GM12878 (cell line): ENCODE measurements at regions of chr10 and their contacts with region 1.

Region 1: DNA sequence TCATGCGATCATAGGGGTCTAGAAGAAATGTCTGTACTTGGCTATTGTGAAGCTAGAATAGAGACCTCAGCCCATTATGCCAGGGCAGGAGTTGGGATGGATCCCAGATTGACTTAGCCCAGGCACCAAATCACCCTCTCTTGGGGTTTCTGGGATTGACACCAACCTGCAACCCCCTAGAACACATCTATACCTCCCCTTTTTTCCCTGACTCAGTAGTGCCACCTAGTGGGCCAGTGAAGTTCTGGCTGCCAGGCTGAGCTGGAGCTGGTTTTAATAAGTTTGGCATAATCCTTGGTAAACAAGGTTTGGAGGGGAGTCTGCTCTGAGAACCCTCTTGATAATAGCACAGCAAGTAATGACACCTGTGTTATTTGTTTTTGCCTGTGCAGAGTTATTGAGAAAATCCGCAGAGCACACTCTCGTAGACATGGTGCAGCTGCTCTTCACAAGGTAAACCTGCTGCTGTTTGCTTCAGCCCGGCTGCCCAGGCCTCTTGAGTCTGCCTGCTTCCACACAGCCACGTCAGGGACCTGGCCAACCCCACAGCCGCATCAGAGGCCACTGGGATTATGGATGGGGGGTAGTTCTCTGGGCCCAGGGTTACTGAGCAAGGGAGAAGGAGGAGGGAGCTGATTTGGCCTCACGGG is 43.3 kb upstream of the NFKB2 start:
- DNase-seq: no peak
- ATAC-seq: peak; percentile 92
- H3K4me3 ChIP-seq: no peak overlapping the region
- H3K27ac ChIP-seq: no peak overlapping the region
- H3K4me1 ChIP-seq: no peaks in the 10 kb centered on the region
- H3K27me3 ChIP-seq: no peaks in the 10 kb centered on the region
- CTCF ChIP-seq: peak; percentile 86 to 95 (median 93)
- EP300 ChIP-seq: no peak
- POLR2A ChIP-seq: no peak
- RAD21 ChIP-seq: peak; percentile 92

Region 2: GRCh38 chr10:102159051-102159597 is 193.1 kb before region 1 on chr10:
- CTCF ChIA-PET with region 1: interaction called, 150 read pairs
- POLR2A ChIA-PET with region 1: interaction called, 3 read pairs
- RAD21 ChIA-PET with region 1: interaction called, 3 read pairs
- SMC1A ChIA-PET with region 1: interaction called, 4 read pairs
- in situ Hi-C with region 1: no loop called
- intact Hi-C with region 1: no loop called
- DNase-seq: no peak
- ATAC-seq: no peak
- H3K4me3 ChIP-seq: no peak overlapping the region
- H3K27ac ChIP-seq: no peak overlapping the region
- H3K4me1 ChIP-seq: no peaks in the 10 kb centered on the region; the same call in 1 of the 2 replicates
- H3K27me3 ChIP-seq: no peaks in the 10 kb centered on the region
- CTCF ChIP-seq: no peak
- EP300 ChIP-seq: no peak
- POLR2A ChIP-seq: no peak
- RAD21 ChIP-seq: no peak

Region 3: DNA sequence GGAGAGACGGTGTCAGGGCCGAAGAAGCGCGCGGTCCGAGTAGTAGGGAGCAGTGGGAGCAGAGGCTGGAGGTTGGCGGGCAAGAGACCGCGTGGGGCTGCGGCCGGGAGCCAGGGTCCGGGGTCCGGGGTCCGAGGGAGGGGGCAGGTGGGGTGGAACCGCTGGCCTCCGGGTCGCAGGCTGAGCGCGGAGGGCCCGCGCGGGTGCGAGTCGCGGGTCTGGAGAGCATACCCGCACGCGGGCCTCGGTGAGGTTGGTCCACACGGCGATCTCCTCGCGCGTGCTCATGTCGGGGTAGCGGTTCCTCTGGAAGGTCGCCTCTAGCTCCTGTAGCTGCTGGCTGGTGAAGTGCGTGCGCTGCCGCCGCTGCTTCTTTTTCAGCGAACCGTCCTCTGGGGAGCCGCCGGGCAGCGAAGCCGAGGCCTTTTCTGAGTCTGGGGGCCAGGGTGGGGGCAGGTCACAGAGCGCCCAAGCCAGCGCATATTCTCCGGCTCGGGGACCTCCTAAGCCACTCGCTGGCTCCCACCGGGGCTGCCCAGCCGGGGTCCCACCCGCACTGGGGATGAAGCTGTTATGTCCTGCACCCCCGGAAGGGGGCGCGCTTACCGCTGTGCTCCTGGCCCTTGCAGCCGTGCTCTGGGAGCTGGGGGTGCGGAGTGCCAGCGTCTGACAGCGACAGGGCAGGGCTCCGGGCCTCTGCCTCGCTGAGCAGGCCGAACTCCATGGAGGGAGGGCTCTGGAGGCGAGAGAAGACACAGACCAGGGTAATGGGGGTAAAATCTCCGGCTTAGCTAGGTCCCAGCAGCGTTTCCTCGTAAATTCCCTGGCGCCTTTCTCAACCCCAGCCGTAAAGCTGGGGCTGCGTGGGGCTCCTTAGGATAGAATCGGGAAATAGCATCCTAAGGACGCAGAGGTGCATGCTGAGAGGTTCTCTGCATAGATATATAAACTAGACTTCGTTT is 120.6 kb before region 1 on chr10:
- CTCF ChIA-PET with region 1: interaction called, 632 read pairs
- POLR2A ChIA-PET with region 1: interaction called, 4 read pairs
- RAD21 ChIA-PET with region 1: interaction called, 256 read pairs
- SMC1A ChIA-PET with region 1: interaction called, 231 read pairs
- in situ Hi-C with region 1: loop called (anchors 5 kb)
- intact Hi-C with region 1: loop called (anchors 1 kb)
- DNase-seq: no peak
- ATAC-seq: peak; percentile 77
- H3K4me3 ChIP-seq: peak overlapping the region; percentile 64
- H3K27ac ChIP-seq: no peak overlapping the region
- H3K4me1 ChIP-seq: peaks cover 10% of the 10 kb centered on the region
- H3K27me3 ChIP-seq: peaks cover 5 to 11% of the 10 kb centered on the region in 2 experiments; a peak in 3 of 4 replicates
- CTCF ChIP-seq: peak; percentile 76 to 90 (median 80)
- EP300 ChIP-seq: no peak
- POLR2A ChIP-seq: no peak
- RAD21 ChIP-seq: peak; percentile 55; the same call in 1 of the 2 replicates

Region 4: DNA sequence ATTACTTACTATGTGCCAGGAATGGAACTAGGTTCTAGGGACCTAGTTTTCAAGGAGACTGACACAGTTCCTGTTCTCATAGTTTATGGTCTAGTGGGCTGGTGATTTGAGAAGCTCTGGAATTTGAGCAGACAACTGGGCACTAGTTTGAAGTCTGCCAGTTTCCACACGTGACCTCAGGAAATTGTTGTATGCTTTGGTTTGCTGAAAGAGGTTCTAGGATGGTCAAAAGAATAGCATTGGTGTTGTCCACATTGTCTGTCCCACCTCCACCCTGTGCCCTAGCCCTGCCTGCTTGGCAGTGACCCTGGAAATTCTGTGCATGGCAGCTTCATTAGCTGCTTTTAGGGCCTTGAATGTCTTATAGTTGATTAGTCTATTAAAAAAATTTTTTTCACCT is 78.1 kb before region 1 on chr10:
- CTCF ChIA-PET with region 1: interaction called, 14 read pairs
- POLR2A ChIA-PET with region 1: no interaction called
- RAD21 ChIA-PET with region 1: no interaction called
- SMC1A ChIA-PET with region 1: interaction called, 4 read pairs
- in situ Hi-C with region 1: no loop called
- intact Hi-C with region 1: no loop called
- DNase-seq: no peak
- ATAC-seq: no peak
- H3K4me3 ChIP-seq: no peak overlapping the region
- H3K27ac ChIP-seq: no peak overlapping the region
- H3K4me1 ChIP-seq: no peaks in the 10 kb centered on the region
- H3K27me3 ChIP-seq: no peaks in the 10 kb centered on the region
- CTCF ChIP-seq: no peak
- EP300 ChIP-seq: no peak
- POLR2A ChIP-seq: no peak
- RAD21 ChIP-seq: no peak

Region 5: DNA sequence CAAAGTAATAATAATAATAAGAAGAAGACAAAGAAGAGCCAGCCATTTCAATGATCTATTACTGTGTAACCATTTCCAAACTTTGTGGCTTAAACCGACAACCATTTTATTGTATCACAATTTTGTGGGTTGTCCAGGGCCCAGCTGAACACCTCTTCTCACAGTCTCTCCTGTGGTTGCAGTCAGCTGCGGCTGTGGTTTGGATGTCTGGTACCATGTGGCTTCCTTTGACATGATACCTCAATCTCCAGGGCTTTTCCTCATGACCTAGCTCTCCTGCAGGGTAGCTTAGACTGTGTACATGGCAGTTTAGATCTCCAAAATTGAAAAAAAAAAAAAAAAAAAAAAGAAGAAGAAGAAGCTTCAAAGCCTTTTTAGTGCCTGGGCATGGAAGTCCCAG is 29.3 kb before region 1 on chr10:
- CTCF ChIA-PET with region 1: interaction called, 37 read pairs
- POLR2A ChIA-PET with region 1: no interaction called
- RAD21 ChIA-PET with region 1: no interaction called
- SMC1A ChIA-PET with region 1: interaction called, 3 read pairs
- in situ Hi-C with region 1: no loop called
- intact Hi-C with region 1: no loop called
- DNase-seq: no peak
- ATAC-seq: peak; percentile 70
- H3K4me3 ChIP-seq: no peak overlapping the region
- H3K27ac ChIP-seq: no peak overlapping the region
- H3K4me1 ChIP-seq: peaks cover 4% of the 10 kb centered on the region; the same call in 1 of the 2 replicates
- H3K27me3 ChIP-seq: no peaks in the 10 kb centered on the region
- CTCF ChIP-seq: no peak
- EP300 ChIP-seq: no peak
- POLR2A ChIP-seq: no peak
- RAD21 ChIP-seq: no peak

Region 6: DNA sequence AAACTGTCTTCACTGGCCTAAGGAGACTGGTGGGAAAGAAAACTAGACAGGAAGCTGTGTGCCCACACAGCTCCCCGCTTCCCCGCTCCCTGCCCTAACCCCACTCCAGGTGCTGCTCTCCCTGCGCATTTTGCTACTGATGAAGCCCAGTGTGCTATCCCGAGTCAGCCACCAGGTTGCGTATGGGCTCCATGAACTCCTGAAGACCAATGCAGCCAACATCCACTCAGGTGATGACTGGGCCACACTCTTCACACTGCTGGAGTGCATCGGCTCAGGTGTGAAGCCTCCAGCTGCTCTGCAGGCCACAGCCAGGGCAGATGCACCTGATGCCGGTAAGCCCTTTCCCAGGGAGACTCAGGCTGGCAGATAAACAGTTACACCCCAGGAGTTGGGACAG is 23.1 kb after region 1 on chr10:
- CTCF ChIA-PET with region 1: interaction called, 17 read pairs
- POLR2A ChIA-PET with region 1: no interaction called
- RAD21 ChIA-PET with region 1: interaction called, 4 read pairs
- SMC1A ChIA-PET with region 1: no interaction called
- in situ Hi-C with region 1: no loop called
- intact Hi-C with region 1: no loop called
- DNase-seq: no peak
- ATAC-seq: peak; percentile 25; the same call in 2 of the 3 replicates
- H3K4me3 ChIP-seq: no peak overlapping the region
- H3K27ac ChIP-seq: no peak overlapping the region
- H3K4me1 ChIP-seq: no peaks in the 10 kb centered on the region
- H3K27me3 ChIP-seq: no peaks in the 10 kb centered on the region
- CTCF ChIP-seq: peak in 2 of 3 experiments; percentile 5 to 9; a peak in 1 of 6 replicates
- EP300 ChIP-seq: no peak
- POLR2A ChIP-seq: no peak
- RAD21 ChIP-seq: 0 out of 2 replicates have a peak, but pooled peaks have one; percentile 21

Region 7: GRCh38 chr10:102583435-102584417 is 231.5 kb after region 1 on chr10:
- CTCF ChIA-PET with region 1: interaction called, 7 read pairs
- POLR2A ChIA-PET with region 1: no interaction called
- RAD21 ChIA-PET with region 1: interaction called, 10 read pairs
- SMC1A ChIA-PET with region 1: no interaction called
- in situ Hi-C with region 1: no loop called
- intact Hi-C with region 1: no loop called
- DNase-seq: peak; percentile 51
- ATAC-seq: peak; percentile 100
- H3K4me3 ChIP-seq: no peak overlapping the region
- H3K27ac ChIP-seq: no peak overlapping the region
- H3K4me1 ChIP-seq: no peaks in the 10 kb centered on the region
- H3K27me3 ChIP-seq: no peaks in the 10 kb centered on the region
- CTCF ChIP-seq: peak; percentile 86 to 96 (median 92)
- EP300 ChIP-seq: no peak
- POLR2A ChIP-seq: no peak
- RAD21 ChIP-seq: peak; percentile 92